ENCODE measurements at regions of chr1 and their contacts with region 1.

Region 1: DNA sequence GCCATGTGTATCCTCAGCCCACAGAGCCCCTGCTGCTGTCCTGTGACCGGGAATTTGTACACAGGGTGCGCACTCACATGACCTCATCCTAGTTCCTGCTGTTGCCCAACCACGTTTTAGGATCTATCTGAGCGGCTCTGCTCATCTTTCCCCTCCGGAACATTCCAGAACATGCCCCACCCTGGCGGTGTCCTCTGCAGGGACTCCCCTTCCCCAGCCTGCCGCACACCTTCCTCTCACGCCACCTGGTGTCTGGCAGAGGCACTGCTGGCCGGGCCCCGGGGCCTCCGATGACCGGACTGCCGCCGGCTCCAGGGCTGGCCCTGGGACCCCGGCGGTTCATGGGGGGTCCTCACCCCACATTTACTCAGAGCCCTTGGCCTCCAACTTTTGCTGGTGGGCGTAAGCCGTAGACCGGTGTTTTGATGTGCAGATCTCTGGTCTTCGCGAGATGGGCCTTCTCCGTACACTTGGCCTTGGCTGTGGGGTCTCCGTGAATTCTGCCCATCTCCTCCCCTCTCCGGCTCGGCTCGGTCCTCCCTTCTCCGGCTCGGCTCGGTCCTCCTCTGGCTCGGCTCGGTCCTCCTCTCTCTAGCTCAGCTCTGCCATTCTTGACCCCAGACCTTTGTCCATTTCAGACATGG is 29.5 kb downstream of the ARHGEF16 start:
- DNase-seq: no peak
- ATAC-seq: peak; percentile 72

Region 2: GRCh38 chr1:3453203-3453761 is 30.6 kb before region 1 on chr1:
- intact Hi-C with region 1: loop called (anchors 2 kb)
- DNase-seq: peak; percentile 83
- ATAC-seq: peak; percentile 82

Measured in Right ventricle myocardium superior (tissue), 1 donor.